PC-9 (cell line): ENCODE measurements at regions of chr2 and their contacts with region 1.

Region 1: DNA sequence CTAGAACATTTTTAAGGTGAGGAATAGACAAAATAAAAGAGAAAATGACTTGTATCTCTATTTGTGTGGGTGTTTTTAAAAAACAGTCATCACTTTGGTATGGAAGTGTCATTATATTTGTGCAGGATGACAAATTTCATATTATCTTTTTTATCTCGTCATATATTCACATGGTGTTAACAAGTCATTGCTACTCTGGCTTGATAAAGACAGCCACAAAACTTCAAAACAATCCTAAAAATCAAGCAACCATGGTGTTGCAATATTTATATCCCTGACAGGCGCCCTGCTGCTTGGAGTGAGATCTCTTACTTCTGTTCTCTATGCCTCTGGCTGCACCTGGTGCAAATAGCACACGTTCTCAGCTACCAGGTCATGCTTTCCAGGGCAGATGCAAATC is 278.0 kb upstream of the EPHA4 start:
- DNase-seq: peak; percentile 34 to 84
- H3K4me3 ChIP-seq: no peak overlapping the region
- H3K27ac ChIP-seq: no peak overlapping the region
- H3K4me1 ChIP-seq: peaks cover 48% of the 10 kb centered on the region
- H3K27me3 ChIP-seq: no peaks in the 10 kb centered on the region
- CTCF ChIP-seq: no peak

Region 2: DNA sequence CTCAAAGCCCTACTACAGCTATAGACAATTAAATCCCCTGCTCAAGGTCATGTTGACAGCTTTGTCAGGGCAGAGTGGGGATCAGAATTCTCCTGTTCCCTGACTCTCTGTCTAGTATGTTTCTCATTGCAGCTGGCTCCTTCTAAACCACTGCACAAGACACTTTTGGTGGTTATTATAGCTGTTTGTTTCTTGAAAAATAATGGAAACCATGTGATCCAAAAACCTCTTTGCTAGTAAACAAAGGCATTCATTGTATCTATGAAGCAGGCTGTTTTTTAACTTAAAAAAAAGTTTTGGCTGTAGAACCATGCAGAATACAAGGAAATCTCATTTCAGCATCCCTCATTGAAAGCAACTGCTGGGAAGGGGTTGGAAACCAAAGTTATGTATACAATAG is 74.5 kb after region 1 on chr2:
- CTCF ChIA-PET with region 1: no interaction called
- POLR2A ChIA-PET with region 1: no interaction called
- intact Hi-C with region 1: no loop called
- DNase-seq: no peak
- H3K4me3 ChIP-seq: no peak overlapping the region
- H3K27ac ChIP-seq: no peak overlapping the region
- H3K4me1 ChIP-seq: 0 out of 2 replicates have a peak, but pooled peaks cover 7% of the 10 kb centered on the region
- H3K27me3 ChIP-seq: no peaks in the 10 kb centered on the region
- CTCF ChIP-seq: no peak

Region 3: DNA sequence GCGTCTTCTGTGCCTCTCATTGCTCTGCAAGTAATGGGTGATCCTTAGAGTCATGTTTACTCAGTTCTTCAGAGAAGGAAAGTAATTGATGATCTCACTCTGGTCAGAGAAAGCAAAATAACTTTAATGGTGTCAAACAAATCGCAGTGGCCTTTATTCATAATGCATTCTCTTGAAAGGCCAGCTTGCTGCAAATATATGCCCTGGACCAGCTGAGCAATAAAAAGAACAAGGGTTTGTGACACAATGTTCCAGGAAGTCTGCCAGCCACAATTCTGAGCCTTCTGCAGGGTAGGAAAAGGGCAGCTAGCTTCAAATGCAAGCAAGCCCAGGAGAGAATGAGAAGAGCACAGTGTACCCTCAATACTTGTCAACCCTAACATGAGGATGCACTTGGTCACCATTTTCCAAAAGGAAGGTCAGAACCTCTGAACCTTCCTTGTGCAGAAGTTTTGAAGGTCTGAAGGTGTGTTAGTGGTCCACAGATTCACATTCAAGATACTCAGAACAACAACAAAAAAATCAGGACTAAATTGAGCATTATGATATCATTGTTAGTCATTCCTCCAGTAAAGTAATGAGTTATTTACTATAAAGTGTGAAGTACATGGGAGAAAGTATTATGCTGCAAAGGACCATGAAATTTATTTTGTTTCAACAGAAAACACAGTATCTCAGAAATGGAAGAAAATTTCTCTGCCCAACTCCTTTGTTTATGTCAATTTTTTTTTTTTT is 93.2 kb after region 1 on chr2:
- CTCF ChIA-PET with region 1: no interaction called
- POLR2A ChIA-PET with region 1: no interaction called
- intact Hi-C with region 1: loop called (anchors 5 kb)
- DNase-seq: peak; percentile 64 to 86
- H3K4me3 ChIP-seq: no peak overlapping the region
- H3K27ac ChIP-seq: peak overlapping the region; percentile 30
- H3K4me1 ChIP-seq: peaks cover 22% of the 10 kb centered on the region
- H3K27me3 ChIP-seq: no peaks in the 10 kb centered on the region
- CTCF ChIP-seq: no peak